PC-3 (cell line): ENCODE measurements at regions of chr10 and their contacts with region 1.

Region 1: DNA sequence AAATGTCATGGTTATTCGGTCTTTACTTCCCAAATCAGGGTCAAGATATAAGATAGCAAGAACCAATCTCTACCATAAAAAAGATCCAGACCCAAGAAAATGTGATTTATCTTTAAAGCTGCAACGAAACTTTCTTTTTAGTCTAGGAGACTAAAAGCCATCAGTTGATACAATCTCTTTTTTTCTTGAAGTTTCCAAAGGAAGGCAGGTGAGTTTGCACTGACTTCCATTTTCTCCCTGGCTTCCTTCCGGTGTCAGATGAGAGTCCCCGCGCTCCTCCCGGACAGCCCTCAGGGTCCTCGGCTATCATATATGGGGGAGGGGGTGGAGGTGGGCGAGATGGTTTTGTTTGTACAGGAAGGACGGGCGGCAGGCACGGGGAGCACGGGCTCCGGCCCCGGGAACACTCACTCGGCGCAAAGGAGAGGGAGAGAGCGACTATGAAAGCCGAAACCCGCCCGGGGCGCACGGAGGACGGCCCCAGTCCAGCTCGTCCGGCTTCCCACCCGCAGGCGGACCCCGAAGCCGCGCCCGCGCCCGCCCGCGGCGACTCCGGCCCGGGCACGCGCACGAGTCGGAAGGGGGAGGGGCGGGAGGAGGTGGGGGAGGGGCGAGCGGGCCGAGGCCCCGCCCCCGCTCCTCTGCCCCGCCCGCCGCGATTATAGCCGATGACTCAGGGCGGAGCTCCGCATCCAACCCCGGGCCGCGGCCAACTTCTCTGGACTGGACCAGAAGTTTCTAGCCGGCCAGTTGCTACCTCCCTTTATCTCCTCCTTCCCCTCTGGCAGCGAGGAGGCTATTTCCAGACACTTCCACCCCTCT is at the start of gene BAG3:
- DNase-seq: peak; percentile 84
- ATAC-seq: peak; percentile 68
- H3K4me3 ChIP-seq: peak within 1 kb of the TSS; percentile 94
- H3K27ac ChIP-seq: peak within 1 kb of the TSS; percentile 77
- H3K4me1 ChIP-seq: peaks cover 22% of the 10 kb centered on the region
- H3K27me3 ChIP-seq: no peaks in the 10 kb centered on the region
- CTCF ChIP-seq: no peak
- total RNA-seq, gene BAG3: 47.1 and 47.6 TPM in 2 replicates

Region 2: GRCh38 chr10:119542988-119543813 is 107.7 kb before region 1 on chr10:
- CTCF ChIA-PET with region 1: no interaction called
- POLR2A ChIA-PET with region 1: no interaction called
- intact Hi-C with region 1: loop called (anchors 5 kb)
- DNase-seq: peak; percentile 56
- ATAC-seq: peak; percentile 42
- H3K4me3 ChIP-seq: peak overlapping the region; percentile 79
- H3K27ac ChIP-seq: 0 out of 2 replicates have a peak overlapping the region, but pooled peaks have one; percentile 3
- H3K4me1 ChIP-seq: peaks cover 27% of the 10 kb centered on the region
- H3K27me3 ChIP-seq: no peaks in the 10 kb centered on the region
- CTCF ChIP-seq: peak; percentile 72

Region 3: GRCh38 chr10:119608316-119609155 is 42.4 kb before region 1 on chr10:
- CTCF ChIA-PET with region 1: no interaction called
- POLR2A ChIA-PET with region 1: no interaction called
- intact Hi-C with region 1: loop called (anchors 2 kb)
- DNase-seq: peak; percentile 63
- ATAC-seq: peak; percentile 100
- H3K4me3 ChIP-seq: no peak overlapping the region
- H3K27ac ChIP-seq: no peak overlapping the region
- H3K4me1 ChIP-seq: peaks cover 5% of the 10 kb centered on the region; the same call in 1 of the 2 replicates
- H3K27me3 ChIP-seq: no peaks in the 10 kb centered on the region
- CTCF ChIP-seq: peak; percentile 90

Region 4: DNA sequence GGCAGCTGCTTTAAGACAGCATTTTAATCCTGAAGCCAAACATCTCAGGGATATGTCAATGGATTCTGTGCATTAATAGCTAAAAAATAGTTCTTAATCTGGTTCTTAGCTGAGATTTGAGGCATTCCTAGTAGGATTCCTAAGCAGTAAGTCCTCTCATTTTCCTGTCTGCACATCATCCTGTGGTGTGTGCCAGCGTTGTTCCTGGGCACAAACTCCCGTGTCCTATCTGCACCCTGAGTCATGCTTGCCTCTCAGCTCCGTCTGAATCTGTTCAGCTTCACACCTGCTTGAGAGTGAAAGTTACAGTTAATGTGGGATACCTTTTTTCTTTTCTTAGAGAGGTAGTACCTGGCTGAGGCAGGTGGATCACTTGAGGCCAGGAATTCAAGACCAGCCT is 19.8 kb after region 1 on chr10:
- CTCF ChIA-PET with region 1: no interaction called
- POLR2A ChIA-PET with region 1: interaction called, 3 read pairs
- intact Hi-C with region 1: loop called (anchors 2 kb)
- DNase-seq: peak; percentile 58
- ATAC-seq: no peak
- H3K4me3 ChIP-seq: no peak overlapping the region
- H3K27ac ChIP-seq: peak overlapping the region; percentile 44
- H3K4me1 ChIP-seq: peaks cover 76% of the 10 kb centered on the region
- H3K27me3 ChIP-seq: no peaks in the 10 kb centered on the region
- CTCF ChIP-seq: no peak

Region 5: DNA sequence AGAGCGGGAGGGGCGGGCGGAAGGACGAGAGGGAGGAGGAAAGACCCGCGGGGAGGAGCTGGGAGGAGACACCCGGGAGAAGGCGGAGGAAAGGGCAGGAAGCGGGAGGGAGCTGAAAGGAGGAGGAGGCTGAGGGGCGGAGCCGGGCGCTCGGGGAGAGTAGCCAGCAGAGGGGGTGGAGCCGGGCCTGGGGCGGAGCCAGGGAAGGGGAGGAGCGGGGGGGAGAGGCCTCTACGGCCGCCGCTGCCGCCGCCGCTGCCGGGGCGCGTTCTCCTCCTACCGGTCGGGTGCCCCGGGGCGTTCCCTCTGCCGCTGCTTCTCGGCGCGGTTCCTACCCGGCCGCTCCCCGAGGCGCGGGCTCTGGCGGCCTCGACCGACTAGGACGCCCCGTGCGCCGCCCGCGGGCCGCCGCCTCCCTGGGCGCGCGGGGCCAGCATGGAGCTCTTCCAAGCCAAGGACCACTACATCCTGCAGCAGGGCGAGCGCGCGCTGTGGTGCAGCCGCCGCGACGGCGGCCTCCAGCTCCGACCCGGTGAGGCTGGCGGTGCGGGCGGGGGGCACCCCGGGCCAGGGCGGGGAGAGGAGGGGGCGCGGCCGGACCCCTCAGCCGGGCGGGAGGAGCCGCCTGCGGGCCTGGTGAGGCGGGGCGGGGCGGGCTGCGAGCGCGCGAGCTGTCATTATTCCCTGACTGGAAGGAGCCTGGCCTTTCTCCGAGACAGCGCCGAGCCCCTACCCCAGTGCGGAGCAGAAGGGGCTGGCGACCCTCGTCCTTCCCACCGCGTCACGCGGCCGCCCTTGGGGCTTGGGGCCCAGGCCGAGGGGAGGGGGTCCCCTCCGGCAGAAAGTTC is 75.1 kb after region 1 on chr10 and contains the start of gene INPP5F:
- CTCF ChIA-PET with region 1: no interaction called
- POLR2A ChIA-PET with region 1: interaction called, 3 read pairs
- intact Hi-C with region 1: loop called (anchors 2 kb)
- DNase-seq: peak; percentile 93
- ATAC-seq: peak; percentile 89
- H3K4me3 ChIP-seq: peak within 1 kb of the TSS; percentile 82
- H3K27ac ChIP-seq: peak within 1 kb of the TSS; percentile 68
- H3K4me1 ChIP-seq: peaks cover 24% of the 10 kb centered on the region
- H3K27me3 ChIP-seq: no peaks in the 10 kb centered on the region
- CTCF ChIP-seq: no peak
- total RNA-seq, gene INPP5F: 8.1 and 8.2 TPM in 2 replicates